ENCODE measurements at regions of chr2 and their contacts with region 1.

Region 1: DNA sequence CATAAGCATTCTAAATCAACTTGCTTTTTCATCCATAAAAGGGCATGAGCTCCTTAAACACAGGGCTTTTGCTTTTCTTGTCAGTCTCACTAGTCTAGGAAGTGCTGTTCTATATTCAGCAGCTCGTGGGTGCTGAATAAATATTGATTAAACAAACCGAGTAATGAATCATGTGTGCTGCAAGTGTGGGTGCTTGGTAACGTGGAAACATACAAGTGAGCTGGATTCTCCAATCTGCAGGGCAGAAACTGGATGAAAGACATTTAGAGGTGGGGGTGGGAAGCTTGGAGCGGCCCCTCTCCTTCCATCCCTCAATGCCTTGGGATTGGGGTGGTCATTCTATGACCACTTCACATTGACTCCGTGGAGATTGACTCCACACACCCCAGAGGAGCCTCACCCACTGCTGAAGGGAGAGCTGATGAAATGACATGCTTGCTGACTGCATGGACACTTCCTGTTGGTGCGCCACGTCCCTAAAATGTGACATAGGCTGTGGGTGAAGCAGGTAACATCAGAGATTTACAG is 114.6 kb downstream of the DOCK10 start:
- DNase-seq: peak; percentile 86
- H3K4me3 Mint-ChIP-seq: peak overlapping the region; percentile 58
- H3K27ac Mint-ChIP-seq: peak overlapping the region; percentile 98
- H3K4me1 Mint-ChIP-seq: peaks cover 97% of the 10 kb centered on the region
- H3K27me3 Mint-ChIP-seq: no peaks in the 10 kb centered on the region

Region 2: GRCh38 chr2:223459328-223459939 is 1468.3 kb before region 1 on chr2:
- CTCF ChIA-PET with region 1: no interaction called
- intact Hi-C with region 1: no loop called
- DNase-seq: no peak
- H3K4me3 Mint-ChIP-seq: no peak overlapping the region
- H3K27ac Mint-ChIP-seq: no peak overlapping the region
- H3K4me1 Mint-ChIP-seq: no peaks in the 10 kb centered on the region
- H3K27me3 Mint-ChIP-seq: no peaks in the 10 kb centered on the region

Region 3: DNA sequence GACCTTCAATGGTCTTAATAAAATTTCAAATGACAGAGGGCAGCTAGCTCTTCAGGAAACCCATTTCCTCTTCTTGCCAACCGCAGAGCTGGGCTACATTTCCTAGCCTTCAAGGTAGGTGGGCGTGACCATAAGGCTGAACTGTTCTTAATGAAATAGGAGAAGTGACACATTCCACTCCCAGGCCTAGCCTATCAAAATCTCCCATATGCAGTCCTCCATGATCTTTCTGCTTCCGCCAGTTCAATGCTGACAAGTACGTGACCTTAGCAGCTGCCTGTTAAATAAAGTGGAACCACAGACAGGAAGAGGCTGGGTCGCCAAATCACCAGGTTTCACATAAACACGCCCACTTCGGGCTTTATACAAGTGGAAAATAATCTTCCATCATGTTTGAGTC is 901.8 kb before region 1 on chr2:
- CTCF ChIA-PET with region 1: no interaction called
- intact Hi-C with region 1: loop called (anchors 5 kb)
- DNase-seq: peak; percentile 84
- H3K4me3 Mint-ChIP-seq: peak overlapping the region; percentile 64
- H3K27ac Mint-ChIP-seq: peak overlapping the region; percentile 95
- H3K4me1 Mint-ChIP-seq: peaks cover 84% of the 10 kb centered on the region
- H3K27me3 Mint-ChIP-seq: no peaks in the 10 kb centered on the region

Region 4: GRCh38 chr2:224885836-224886547 is 41.7 kb before region 1 on chr2:
- CTCF ChIA-PET with region 1: interaction called, 3 read pairs
- intact Hi-C with region 1: loop called (anchors 1 kb)
- DNase-seq: no peak
- H3K4me3 Mint-ChIP-seq: no peak overlapping the region
- H3K27ac Mint-ChIP-seq: peak overlapping the region; percentile 81
- H3K4me1 Mint-ChIP-seq: peaks cover 71% of the 10 kb centered on the region
- H3K27me3 Mint-ChIP-seq: no peaks in the 10 kb centered on the region

Region 5: GRCh38 chr2:224946895-224947294 is 19.2 kb after region 1 on chr2:
- CTCF ChIA-PET with region 1: interaction called, 66 read pairs
- intact Hi-C with region 1: loop called (anchors 1 kb)
- DNase-seq: no peak
- H3K4me3 Mint-ChIP-seq: peak overlapping the region; percentile 82
- H3K27ac Mint-ChIP-seq: peak overlapping the region; percentile 94
- H3K4me1 Mint-ChIP-seq: peaks cover 58% of the 10 kb centered on the region
- H3K27me3 Mint-ChIP-seq: no peaks in the 10 kb centered on the region

Region 6: DNA sequence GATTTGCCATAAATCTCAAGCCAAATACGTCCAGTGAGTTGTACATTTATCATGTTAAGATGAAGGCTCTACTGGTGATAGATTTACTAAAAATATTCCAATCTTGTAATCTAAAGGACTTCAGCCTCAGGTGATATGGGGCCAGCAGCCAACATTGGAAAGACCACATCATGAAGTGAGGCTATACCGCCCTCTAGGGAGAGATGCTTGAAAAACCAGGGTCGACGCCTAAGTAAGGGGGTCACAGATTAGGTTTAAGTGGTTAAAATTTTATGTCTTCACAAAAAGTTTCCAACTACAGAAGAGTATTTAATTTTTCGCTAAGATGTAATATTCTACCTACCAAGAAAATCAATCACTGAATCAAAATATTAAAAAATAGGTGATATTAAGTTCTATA is 81.2 kb after region 1 on chr2:
- CTCF ChIA-PET with region 1: interaction called, 4 read pairs
- intact Hi-C with region 1: loop called (anchors 1 kb)
- DNase-seq: peak; percentile 47
- H3K4me3 Mint-ChIP-seq: no peak overlapping the region
- H3K27ac Mint-ChIP-seq: no peak overlapping the region
- H3K4me1 Mint-ChIP-seq: peaks cover 92% of the 10 kb centered on the region
- H3K27me3 Mint-ChIP-seq: no peaks in the 10 kb centered on the region

Region 7: DNA sequence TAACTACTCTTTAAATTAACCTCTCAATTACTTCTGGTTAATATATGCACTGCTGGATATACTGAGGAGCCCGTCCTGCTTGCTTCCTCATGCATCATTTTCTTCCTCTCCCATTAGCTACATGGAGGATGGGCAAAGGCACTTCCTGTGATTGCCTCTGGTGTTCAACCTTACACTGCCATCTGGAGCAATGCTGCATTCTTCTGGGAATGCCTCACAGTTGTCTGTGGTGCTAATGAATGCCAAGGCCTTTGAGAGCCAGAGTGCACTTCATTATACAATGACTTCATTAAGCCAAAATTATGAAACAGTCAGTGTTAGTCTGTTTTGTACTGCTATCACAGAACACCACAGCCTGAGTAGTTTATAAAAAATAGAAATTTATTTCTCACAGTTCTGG is 249.4 kb after region 1 on chr2:
- CTCF ChIA-PET with region 1: no interaction called
- intact Hi-C with region 1: no loop called
- DNase-seq: peak; percentile 9
- H3K4me3 Mint-ChIP-seq: no peak overlapping the region
- H3K27ac Mint-ChIP-seq: no peak overlapping the region
- H3K4me1 Mint-ChIP-seq: no peaks in the 10 kb centered on the region
- H3K27me3 Mint-ChIP-seq: no peaks in the 10 kb centered on the region

Region 8: GRCh38 chr2:225660262-225661131 is 732.8 kb after region 1 on chr2:
- CTCF ChIA-PET with region 1: no interaction called
- intact Hi-C with region 1: loop called (anchors 5 kb)
- DNase-seq: peak; percentile 90
- H3K4me3 Mint-ChIP-seq: no peak overlapping the region
- H3K27ac Mint-ChIP-seq: no peak overlapping the region
- H3K4me1 Mint-ChIP-seq: no peaks in the 10 kb centered on the region
- H3K27me3 Mint-ChIP-seq: peaks cover 15% of the 10 kb centered on the region